Transverse colon (tissue), 4 donors: ENCODE measurements at regions of chr16 and their contacts with region 1.

Region 1: GRCh38 chr16:63289852-63290460 is 1253.7 kb upstream of the CDH8 start:
- DNase-seq: peak; percentile 15
- H3K4me3 ChIP-seq: no peak overlapping the region
- H3K27ac ChIP-seq: no peak overlapping the region
- H3K4me1 ChIP-seq: no peaks in the 10 kb centered on the region
- H3K27me3 ChIP-seq: no peaks in the 10 kb centered on the region
- CTCF ChIP-seq: peak; percentile 45 to 86 (median 68)
- EP300 ChIP-seq: no peak
- POLR2A ChIP-seq: no peak

Region 2: GRCh38 chr16:62190426-62190825 is 1099.5 kb before region 1 on chr16:
- in situ Hi-C with region 1: loop called in 1 of 4 experiments (anchors 25 kb)
- intact Hi-C with region 1: no loop called
- DNase-seq: no peak
- H3K4me3 ChIP-seq: no peak overlapping the region
- H3K27ac ChIP-seq: no peak overlapping the region
- H3K4me1 ChIP-seq: no peaks in the 10 kb centered on the region
- H3K27me3 ChIP-seq: no peaks in the 10 kb centered on the region
- CTCF ChIP-seq: no peak
- EP300 ChIP-seq: no peak
- POLR2A ChIP-seq: no peak

Region 3: DNA sequence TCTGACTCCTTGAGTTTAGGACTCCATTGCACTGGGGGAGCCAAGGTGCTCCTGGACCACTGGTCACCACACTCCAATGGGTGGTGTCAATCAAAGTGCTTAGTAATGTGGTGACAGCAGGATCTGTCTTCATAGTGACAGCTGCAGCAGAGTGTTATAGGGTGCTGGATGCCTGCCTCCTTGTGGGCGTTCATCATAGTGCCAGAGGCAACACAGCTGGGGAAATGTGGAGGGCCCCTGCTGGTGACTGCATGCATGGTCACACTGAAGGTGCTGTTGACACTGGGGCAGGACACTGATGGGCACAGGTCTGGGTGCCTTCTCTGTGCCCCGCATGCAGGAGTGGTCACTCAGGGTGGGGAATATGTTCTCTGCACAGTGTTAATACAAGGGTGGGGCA is 1076.2 kb before region 1 on chr16:
- in situ Hi-C with region 1: loop called in 1 of 4 experiments (anchors 25 kb)
- intact Hi-C with region 1: no loop called
- DNase-seq: no peak
- H3K4me3 ChIP-seq: no peak overlapping the region
- H3K27ac ChIP-seq: no peak overlapping the region
- H3K4me1 ChIP-seq: no peaks in the 10 kb centered on the region
- H3K27me3 ChIP-seq: no peaks in the 10 kb centered on the region
- CTCF ChIP-seq: no peak
- EP300 ChIP-seq: no peak
- POLR2A ChIP-seq: no peak

Region 4: GRCh38 chr16:62225697-62226280 is 1064.2 kb before region 1 on chr16:
- in situ Hi-C with region 1: loop called in 2 of 4 experiments (anchors 25 kb)
- intact Hi-C with region 1: no loop called
- DNase-seq: peak; percentile 60
- H3K4me3 ChIP-seq: no peak overlapping the region
- H3K27ac ChIP-seq: no peak overlapping the region
- H3K4me1 ChIP-seq: no peaks in the 10 kb centered on the region
- H3K27me3 ChIP-seq: no peaks in the 10 kb centered on the region
- CTCF ChIP-seq: peak in 2 of 5 experiments; percentile 21 to 37
- EP300 ChIP-seq: no peak
- POLR2A ChIP-seq: no peak